ENCODE measurements at regions of chr4 and their contacts with region 1.

Region 1: DNA sequence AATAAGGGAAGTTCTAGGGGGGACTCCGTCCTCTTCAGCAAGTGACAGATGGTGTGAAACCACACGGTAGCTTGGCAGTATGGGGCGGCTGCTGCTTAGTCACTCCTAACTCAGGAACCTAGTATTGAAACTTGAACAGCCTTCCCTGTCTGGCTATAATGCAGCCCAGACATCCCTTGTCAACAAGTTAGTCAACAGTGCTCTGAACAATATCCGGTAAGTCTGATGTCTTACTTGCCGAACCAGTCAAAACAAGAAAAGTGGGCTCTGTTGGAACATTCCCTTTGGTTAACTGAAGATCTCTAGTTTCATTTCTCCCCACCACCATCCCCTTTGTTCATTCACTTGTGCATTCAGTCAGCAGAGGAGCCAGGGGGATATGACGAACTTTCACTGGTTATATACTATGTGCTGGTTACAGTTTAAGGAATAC is 18.7 kb upstream of the CXCL13 start:
- DNase-seq: peak; percentile 87
- H3K4me3 Mint-ChIP-seq: peak overlapping the region; percentile 33
- H3K27ac Mint-ChIP-seq: peak overlapping the region; percentile 71
- H3K4me1 Mint-ChIP-seq: peaks cover 46% of the 10 kb centered on the region
- H3K27me3 Mint-ChIP-seq: peaks cover 15% of the 10 kb centered on the region

Region 2: DNA sequence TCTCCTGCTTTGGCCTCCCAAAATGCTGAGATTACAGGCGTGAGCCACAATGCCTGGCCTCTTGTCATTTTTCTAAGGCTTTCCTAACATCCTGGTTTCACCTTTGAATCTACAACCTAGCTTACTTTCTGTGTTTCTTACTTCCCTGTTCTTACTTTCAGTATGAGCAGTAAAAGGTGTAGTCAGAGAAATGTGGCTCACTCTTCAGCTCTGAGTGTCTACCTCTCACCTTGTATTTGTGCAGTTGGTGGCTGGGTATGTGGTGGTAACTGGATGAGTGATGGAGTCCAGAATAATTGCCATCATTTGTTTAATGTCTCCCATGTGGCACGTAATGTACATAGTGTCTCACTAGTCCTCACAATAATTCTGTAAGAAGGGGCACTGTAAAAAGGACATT is 1532.0 kb before region 1 on chr4:
- CTCF ChIA-PET with region 1: no interaction called
- POLR2A ChIA-PET with region 1: no interaction called
- intact Hi-C with region 1: loop called (anchors 1 kb)
- DNase-seq: peak; percentile 56
- H3K4me3 Mint-ChIP-seq: no peak overlapping the region
- H3K27ac Mint-ChIP-seq: peak overlapping the region; percentile 49
- H3K4me1 Mint-ChIP-seq: peaks cover 41% of the 10 kb centered on the region
- H3K27me3 Mint-ChIP-seq: peaks cover 18% of the 10 kb centered on the region

Region 3: DNA sequence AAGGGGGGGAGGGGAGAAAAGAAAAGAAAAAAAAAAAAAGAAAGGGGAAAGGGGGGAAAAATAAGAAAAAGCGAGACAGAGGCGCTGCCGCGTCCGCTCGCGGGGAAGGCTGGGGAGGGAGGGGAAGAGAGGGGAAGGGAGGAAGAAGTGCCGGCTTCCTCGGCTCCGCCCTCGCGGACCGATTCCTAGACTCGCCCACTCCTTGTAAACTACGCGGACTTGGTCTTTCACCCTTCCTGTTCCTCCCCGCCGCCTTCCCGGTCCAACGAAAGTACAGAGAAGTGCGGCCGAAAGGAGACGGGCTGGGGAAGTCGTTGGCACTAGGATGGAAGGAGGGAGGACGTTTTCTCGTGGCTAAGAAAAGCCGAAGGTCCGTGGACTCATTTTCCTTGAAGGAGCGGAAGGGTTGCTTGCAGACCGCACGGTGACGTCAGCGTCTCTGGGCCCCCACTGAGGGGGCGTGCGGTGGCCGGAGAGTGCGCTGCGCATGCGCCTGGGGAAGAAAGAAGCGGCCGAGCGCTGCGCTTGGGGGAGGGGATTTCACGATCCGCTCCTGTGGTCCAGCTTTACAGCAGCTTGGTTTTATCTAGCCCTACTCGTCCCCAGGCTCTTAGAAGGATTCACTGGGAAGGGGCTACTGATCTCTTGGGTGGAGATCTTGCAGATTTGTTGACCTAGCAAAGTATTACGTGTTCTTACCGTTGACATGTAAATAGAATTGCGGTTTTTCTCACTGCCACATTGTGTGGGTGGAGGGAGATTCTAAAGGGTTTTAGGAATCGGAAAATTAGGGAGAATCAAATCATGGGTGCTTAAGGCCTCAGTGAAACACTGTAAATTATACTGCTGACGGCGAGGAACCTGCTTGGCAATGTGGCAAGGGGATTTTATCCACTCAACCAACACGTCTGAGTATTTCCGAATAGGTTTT is 510.8 kb before region 1 on chr4 and contains the start of gene CCNI:
- CTCF ChIA-PET with region 1: no interaction called
- POLR2A ChIA-PET with region 1: no interaction called
- intact Hi-C with region 1: loop called (anchors 1 kb)
- DNase-seq: peak; percentile 94
- H3K4me3 Mint-ChIP-seq: peak within 1 kb of the TSS; percentile 93
- H3K27ac Mint-ChIP-seq: no peak within 1 kb of the TSS
- H3K4me1 Mint-ChIP-seq: peaks cover 26% of the 10 kb centered on the region
- H3K27me3 Mint-ChIP-seq: no peaks in the 10 kb centered on the region
- total RNA-seq, gene CCNI: 259 to 264 TPM

Region 4: DNA sequence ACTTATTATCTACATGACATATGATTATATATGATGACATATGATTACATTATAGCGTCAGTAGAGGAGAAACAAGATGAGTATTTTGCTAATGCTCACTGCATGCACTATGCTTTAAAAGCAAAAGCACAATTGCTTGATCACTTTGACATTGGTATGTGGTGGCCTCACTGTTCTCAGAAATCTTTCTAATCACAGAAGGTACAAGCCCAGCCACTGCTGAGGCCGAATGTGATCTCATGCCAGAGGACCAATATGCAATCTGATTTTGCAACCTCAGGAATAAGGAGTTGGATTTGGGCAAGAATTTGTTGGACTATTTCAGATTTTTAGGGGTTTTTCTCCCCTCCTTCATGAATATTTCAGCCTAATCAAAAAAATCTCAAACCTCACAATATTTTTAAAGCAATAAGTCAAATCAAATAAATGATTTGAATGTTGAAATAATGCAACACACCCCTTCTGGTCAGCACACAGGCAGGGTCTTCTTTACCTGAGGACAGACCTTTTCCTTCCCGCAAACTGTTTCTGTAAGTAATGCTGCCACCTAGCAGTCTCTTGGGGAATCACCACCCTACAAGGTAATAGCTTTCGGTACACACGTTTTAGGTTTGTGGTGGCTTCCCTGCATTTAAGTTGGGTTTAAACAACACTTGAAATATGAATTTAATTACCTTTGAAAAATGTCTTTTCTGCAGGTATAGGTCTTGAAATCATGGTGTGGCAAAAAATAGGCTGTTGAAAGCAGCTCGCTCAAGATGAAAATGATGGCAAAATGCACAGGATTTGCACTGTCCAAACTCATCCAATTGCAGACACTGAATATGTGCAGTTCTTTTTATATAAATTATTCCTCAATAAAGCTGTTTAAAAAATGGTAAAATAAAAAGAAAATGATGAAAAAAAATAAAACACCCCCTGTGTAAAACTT is 13.8 kb after region 1 on chr4:
- CTCF ChIA-PET with region 1: interaction called, 55 read pairs
- POLR2A ChIA-PET with region 1: interaction called, 3 read pairs
- intact Hi-C with region 1: loop called (anchors 1 kb)
- DNase-seq: peak; percentile 43
- H3K4me3 Mint-ChIP-seq: no peak overlapping the region
- H3K27ac Mint-ChIP-seq: no peak overlapping the region
- H3K4me1 Mint-ChIP-seq: peaks cover 18% of the 10 kb centered on the region
- H3K27me3 Mint-ChIP-seq: peaks cover 24% of the 10 kb centered on the region

Region 5: DNA sequence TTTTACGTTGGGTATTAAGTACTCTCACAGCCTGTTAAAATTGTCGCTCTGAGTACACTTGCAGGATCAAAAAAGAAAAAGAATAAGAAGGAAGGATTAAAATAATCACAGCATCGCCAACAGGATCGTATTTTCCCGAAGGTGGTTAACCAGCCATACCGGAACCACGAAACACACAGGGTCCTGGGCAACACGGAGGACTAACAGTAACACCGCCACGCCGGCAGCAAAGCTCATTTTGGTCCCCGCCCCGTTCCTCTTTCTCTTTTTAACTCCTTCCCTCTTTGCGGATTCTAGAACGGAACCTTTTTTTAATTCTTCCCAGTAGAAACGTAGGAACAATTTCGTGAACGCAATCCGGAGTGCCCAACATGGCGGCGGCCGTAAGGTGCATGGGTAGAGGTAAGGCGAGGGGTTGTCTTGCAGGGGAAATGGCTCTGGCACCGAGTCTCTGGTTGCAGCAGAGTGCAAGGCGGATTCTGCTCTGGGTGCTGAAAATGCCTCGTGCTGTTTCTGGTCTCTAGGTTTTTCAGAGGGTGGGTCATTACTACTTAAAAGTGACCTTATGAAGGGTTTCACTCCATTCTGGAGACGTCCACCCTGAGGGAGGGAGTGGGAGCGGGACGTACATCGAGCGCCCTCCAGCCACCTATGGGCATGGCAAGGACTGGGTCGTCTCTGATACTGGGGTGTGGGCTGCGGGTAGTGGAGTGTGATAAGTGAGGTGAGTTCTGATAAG is 275.7 kb after region 1 on chr4 and contains the start of gene MRPL1:
- CTCF ChIA-PET with region 1: no interaction called
- POLR2A ChIA-PET with region 1: interaction called, 4 read pairs
- intact Hi-C with region 1: loop called (anchors 1 kb)
- DNase-seq: peak; percentile 92
- H3K4me3 Mint-ChIP-seq: peak within 1 kb of the TSS; percentile 86
- H3K27ac Mint-ChIP-seq: peak within 1 kb of the TSS; percentile 99
- H3K4me1 Mint-ChIP-seq: peaks cover 58% of the 10 kb centered on the region
- H3K27me3 Mint-ChIP-seq: peaks cover 4% of the 10 kb centered on the region
- total RNA-seq, gene MRPL1: 46.2 to 51.1 TPM

Region 6: GRCh38 chr4:78938868-78939666 is 1352.1 kb after region 1 on chr4 and contains the start of gene PAQR3:
- CTCF ChIA-PET with region 1: no interaction called
- POLR2A ChIA-PET with region 1: no interaction called
- intact Hi-C with region 1: loop called (anchors 5 kb)
- DNase-seq: peak; percentile 85
- H3K4me3 Mint-ChIP-seq: peak within 1 kb of the TSS; percentile 95
- H3K27ac Mint-ChIP-seq: no peak within 1 kb of the TSS
- H3K4me1 Mint-ChIP-seq: peaks cover 36% of the 10 kb centered on the region
- H3K27me3 Mint-ChIP-seq: peaks cover 12% of the 10 kb centered on the region
- total RNA-seq, gene PAQR3: 6.9 to 10.2 TPM